Left ventricle myocardium superior (tissue), 1 donor: ENCODE measurements at regions of chr10 and their contacts with region 1.

Region 1: GRCh38 chr10:22325272-22326144 is 4.6 kb downstream of the BMI1 start:
- DNase-seq: peak; percentile 83
- ATAC-seq: peak; percentile 46

Region 2: GRCh38 chr10:22646388-22646853 is 320.9 kb after region 1 on chr10:
- intact Hi-C with region 1: no loop called
- DNase-seq: no peak
- ATAC-seq: no peak

Region 3: GRCh38 chr10:22714479-22715289 is 389.2 kb after region 1 on chr10 and contains the start of gene PIP4K2A:
- intact Hi-C with region 1: loop called (anchors 10 kb)
- DNase-seq: peak; percentile 91
- ATAC-seq: peak; percentile 92
- total RNA-seq, gene PIP4K2A: 12.1 TPM